ENCODE measurements at regions of chr13 and their contacts with region 1.

Region 1: GRCh38 chr13:26698392-26699196 is 62.0 kb downstream of the GPR12 start:
- DNase-seq: peak; percentile 79 to 90 (median 84)
- H3K4me3 ChIP-seq: peak overlapping the region in 2 of 7 experiments; percentile 20 to 29
- H3K27ac ChIP-seq: no peak overlapping the region
- H3K4me1 ChIP-seq: peaks cover 0 to 2% (median 1%) of the 10 kb centered on the region in 4 experiments
- H3K27me3 ChIP-seq: no peaks in the 10 kb centered on the region

Region 2: DNA sequence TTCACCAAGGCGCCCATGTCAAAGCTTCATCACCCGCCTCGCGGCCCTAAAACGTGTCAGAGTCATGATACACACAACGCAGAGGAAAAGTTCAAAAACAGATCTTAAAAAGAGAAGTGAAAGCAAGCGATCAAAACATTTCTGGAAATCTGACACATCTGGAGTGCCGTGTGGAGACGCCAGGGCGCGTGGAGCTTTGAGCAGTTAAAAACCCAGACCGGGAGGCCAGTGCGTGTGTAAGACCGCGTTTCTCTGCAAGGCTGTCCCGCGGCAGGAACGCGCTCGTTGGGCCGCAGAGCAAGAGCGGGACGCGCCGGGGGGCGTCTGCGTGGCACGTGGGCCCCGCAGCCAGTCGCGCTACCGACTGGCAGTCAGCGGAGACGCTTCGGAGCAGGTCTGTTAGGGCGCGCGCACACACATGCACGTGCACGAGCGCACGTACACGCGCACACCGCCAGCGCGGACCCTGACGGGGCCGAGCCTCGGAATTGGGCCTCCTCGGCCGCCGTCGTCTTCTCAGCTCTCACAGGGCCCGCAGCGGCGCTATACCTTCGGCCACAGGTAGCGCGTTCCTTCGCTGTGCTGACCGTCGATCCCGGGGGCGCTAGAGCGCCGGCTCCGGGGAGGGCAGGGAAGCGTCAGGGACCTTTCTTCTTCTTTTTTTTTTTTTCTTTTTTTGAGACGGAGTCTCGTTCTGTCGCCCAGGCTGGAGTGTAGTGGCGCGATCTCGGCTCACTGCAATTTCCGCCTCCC is 512.3 kb before region 1 on chr13:
- CTCF ChIA-PET with region 1: interaction called, 38 read pairs
- POLR2A ChIA-PET with region 1: no interaction called
- DNase-seq: peak; percentile 96 to 98 (median 98)
- H3K4me3 ChIP-seq: peak overlapping the region; percentile 67 to 89 (median 71)
- H3K27ac ChIP-seq: peak overlapping the region; percentile 17 to 71
- H3K4me1 ChIP-seq: peaks cover 0 to 14% (median 9%) of the 10 kb centered on the region in 4 experiments
- H3K27me3 ChIP-seq: no peaks in the 10 kb centered on the region

Region 3: DNA sequence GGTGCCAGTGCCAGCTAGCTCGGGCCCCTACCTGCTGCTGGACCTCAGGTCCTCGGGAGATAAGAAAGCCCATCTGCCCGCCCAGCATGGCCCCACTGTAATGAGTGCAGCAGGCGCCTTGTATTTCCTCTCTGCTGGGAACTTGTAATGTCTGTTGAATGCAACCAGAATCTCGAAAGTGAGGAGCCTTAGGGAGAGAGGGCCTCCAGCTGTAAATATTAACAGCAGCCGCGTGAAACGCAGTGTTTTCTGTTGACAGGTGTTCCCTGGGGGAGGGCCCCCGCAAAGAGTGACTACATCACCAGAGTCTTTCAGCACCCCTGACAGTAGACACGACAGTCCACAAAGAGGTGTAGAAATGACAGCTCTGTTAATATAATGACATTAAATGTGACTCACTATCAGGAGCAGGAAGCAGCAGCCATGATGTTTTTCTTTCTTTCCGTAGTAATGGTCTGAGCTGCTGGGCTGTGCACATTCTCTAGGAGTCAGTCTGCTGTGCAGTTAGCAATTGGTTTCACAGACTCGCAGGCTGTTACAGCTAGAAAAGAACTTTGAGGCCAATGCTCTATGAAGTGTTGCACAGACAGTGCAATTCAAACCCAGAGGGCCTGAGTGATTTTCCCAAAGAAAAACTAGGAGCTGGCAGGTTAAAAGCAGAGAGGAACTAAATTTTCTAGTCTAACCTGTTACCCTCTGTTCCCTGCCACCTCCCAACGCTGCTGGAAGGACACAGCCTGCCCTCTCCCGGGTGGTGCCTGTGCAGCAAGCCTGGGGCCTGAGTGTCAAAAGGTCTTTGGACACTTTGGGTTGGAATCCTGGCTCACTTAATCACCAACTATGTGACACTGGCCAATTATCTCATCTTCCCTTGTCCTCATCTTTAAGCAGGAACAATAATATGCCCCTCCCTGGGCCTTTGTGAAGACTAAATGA is 199.7 kb before region 1 on chr13:
- CTCF ChIA-PET with region 1: interaction called, 11 read pairs
- POLR2A ChIA-PET with region 1: no interaction called
- DNase-seq: no peak
- H3K4me3 ChIP-seq: no peak overlapping the region
- H3K27ac ChIP-seq: no peak overlapping the region
- H3K4me1 ChIP-seq: peaks cover 0 to 16% (median 3%) of the 10 kb centered on the region in 4 experiments
- H3K27me3 ChIP-seq: peaks cover 0 to 2% (median 0%) of the 10 kb centered on the region in 5 experiments

Region 4: GRCh38 chr13:26605845-26606244 is 92.7 kb before region 1 on chr13:
- CTCF ChIA-PET with region 1: interaction called, 11 read pairs
- POLR2A ChIA-PET with region 1: interaction called, 3 read pairs
- DNase-seq: peak in 1 of 3 donors; percentile 13
- H3K4me3 ChIP-seq: no peak overlapping the region
- H3K27ac ChIP-seq: no peak overlapping the region
- H3K4me1 ChIP-seq: peaks cover 0 to 13% (median 8%) of the 10 kb centered on the region in 4 experiments
- H3K27me3 ChIP-seq: no peaks in the 10 kb centered on the region

Region 5: DNA sequence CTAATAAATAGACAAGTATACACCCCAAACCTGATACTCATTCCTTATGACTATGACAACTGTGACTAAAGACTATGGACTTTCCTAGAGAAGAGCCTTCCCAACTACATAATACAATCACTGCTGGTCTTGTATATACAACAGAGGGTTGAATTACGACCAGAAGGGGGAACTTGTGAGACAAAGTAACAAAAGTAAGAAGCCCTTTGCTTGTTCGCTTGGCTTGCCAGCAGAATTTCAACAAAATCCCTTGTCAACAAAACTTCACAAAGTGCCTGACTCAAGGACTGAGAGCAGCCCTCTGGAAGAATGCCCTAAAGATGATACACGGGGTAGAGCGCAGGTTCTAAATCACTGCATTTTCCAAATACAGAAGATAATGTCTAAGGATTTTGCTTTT is 41.7 kb before region 1 on chr13:
- CTCF ChIA-PET with region 1: interaction called, 12 read pairs
- POLR2A ChIA-PET with region 1: no interaction called
- DNase-seq: peak in 2 of 3 donors; percentile 31 to 54
- H3K4me3 ChIP-seq: no peak overlapping the region
- H3K27ac ChIP-seq: no peak overlapping the region
- H3K4me1 ChIP-seq: peaks cover 0 to 8% (median 4%) of the 10 kb centered on the region in 4 experiments
- H3K27me3 ChIP-seq: no peaks in the 10 kb centered on the region

Region 6: DNA sequence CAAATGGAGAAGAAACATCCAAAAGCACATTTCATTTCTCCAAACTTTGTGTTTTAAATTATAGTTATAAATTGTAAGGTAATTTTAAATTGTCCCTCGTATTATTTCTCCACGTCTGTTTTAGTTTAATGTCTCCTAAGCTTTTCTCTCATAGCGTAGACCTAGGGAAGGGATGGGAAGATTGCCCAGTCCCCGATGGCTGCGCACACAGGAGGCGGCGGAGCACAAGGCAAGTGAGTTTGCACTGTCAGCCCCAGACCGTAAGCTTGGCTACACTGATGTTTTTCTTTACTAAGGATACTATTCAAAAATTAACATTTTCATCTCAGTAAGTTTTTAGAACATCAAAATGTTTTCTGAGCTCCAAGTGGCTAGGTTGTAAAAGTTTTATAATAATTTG is 10.3 kb before region 1 on chr13:
- CTCF ChIA-PET with region 1: interaction called, 19 read pairs
- POLR2A ChIA-PET with region 1: no interaction called
- DNase-seq: no peak
- H3K4me3 ChIP-seq: no peak overlapping the region
- H3K27ac ChIP-seq: no peak overlapping the region
- H3K4me1 ChIP-seq: no peaks in the 10 kb centered on the region
- H3K27me3 ChIP-seq: no peaks in the 10 kb centered on the region